Activated CD8-positive, alpha-beta T cell treated with anti-CD3 and anti-CD28 coated beads, Interleukin-2, amount 10 ng/mL, durations not matched to agents 7 days and 5 days (primary cell): ENCODE measurements at regions of chr15 and their contacts with region 1.

Region 1: DNA sequence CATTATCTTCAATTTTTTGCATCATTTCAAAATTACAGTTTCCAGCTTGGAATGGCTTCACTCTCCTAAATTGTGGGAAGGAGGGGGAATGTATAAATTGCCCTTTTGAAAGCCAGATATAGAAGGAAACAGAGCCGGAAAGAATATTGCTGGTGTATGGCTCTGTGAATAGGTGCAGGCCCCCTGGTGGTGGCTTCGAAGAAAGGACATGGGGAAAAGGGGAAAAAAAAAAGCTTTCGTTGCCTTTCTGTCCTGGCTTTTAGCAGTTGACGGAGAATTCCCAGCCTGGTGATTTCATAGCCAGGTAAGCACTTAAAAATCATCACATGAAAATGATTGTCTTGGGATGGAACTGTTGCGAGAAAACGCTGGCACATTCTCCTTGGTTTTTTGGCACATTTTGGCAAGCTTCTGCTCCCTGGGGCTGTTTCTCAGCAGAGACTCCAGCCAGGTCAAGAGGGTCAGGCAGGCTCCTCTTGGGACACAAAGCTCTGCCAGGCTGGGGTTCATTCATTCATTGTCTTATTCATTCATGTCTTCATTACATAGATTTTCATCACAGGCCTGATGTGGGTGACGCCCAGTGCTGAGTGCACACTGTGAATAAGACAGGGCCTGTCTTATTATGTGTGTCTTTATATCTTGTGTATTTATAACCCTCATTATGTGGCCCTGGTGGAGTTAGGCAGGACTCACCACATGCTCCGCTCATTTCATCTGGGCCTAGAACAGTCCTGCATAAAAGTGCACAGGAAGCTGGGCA is 300.0 kb upstream of the TPM1 start:
- DNase-seq: peak; percentile 47
- ATAC-seq: peak; percentile 55
- H3K4me3 Mint-ChIP-seq: no peak overlapping the region
- H3K27ac Mint-ChIP-seq: no peak overlapping the region
- H3K4me1 Mint-ChIP-seq: no peaks in the 10 kb centered on the region
- H3K27me3 Mint-ChIP-seq: no peaks in the 10 kb centered on the region

Region 2: GRCh38 chr15:62482785-62483429 is 259.7 kb before region 1 on chr15:
- CTCF ChIA-PET with region 1: no interaction called
- POLR2A ChIA-PET with region 1: no interaction called
- DNase-seq: peak; percentile 37
- ATAC-seq: peak; percentile 53
- H3K4me3 Mint-ChIP-seq: no peak overlapping the region
- H3K27ac Mint-ChIP-seq: no peak overlapping the region
- H3K4me1 Mint-ChIP-seq: peaks cover 4% of the 10 kb centered on the region
- H3K27me3 Mint-ChIP-seq: peaks cover 4% of the 10 kb centered on the region

Region 3: GRCh38 chr15:62706317-62706716 is 36.3 kb before region 1 on chr15:
- CTCF ChIA-PET with region 1: interaction called, 10 read pairs
- POLR2A ChIA-PET with region 1: interaction called, 3 read pairs
- DNase-seq: no peak
- ATAC-seq: no peak
- H3K4me3 Mint-ChIP-seq: no peak overlapping the region
- H3K27ac Mint-ChIP-seq: no peak overlapping the region
- H3K4me1 Mint-ChIP-seq: no peaks in the 10 kb centered on the region
- H3K27me3 Mint-ChIP-seq: no peaks in the 10 kb centered on the region

Region 4: DNA sequence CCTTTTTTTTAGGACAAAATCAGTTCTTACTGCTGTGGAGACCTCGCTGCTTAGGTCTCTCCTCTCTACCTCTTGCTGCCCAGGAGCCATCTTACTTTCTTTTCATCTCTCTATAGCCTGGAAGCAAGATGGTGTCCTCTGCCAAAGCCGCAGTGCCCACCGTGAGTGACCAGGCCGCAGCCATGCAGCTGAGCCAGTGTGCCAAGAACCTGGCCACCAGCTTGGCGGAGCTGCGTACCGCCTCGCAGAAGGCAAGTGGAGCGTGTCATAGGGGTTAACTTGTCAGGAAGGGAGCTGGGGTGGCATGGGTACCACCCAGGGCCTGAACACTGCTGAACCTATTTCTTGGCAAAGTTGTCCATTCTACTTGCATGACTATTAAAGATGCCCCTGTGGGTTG is 20.4 kb before region 1 on chr15:
- CTCF ChIA-PET with region 1: interaction called, 12 read pairs
- POLR2A ChIA-PET with region 1: no interaction called
- DNase-seq: no peak
- ATAC-seq: no peak
- H3K4me3 Mint-ChIP-seq: no peak overlapping the region
- H3K27ac Mint-ChIP-seq: no peak overlapping the region
- H3K4me1 Mint-ChIP-seq: no peaks in the 10 kb centered on the region
- H3K27me3 Mint-ChIP-seq: no peaks in the 10 kb centered on the region

Region 5: GRCh38 chr15:62732078-62732477 is 10.5 kb before region 1 on chr15:
- CTCF ChIA-PET with region 1: interaction called, 12 read pairs
- POLR2A ChIA-PET with region 1: interaction called, 3 read pairs
- DNase-seq: no peak
- ATAC-seq: no peak
- H3K4me3 Mint-ChIP-seq: no peak overlapping the region
- H3K27ac Mint-ChIP-seq: no peak overlapping the region
- H3K4me1 Mint-ChIP-seq: no peaks in the 10 kb centered on the region
- H3K27me3 Mint-ChIP-seq: peaks cover 11% of the 10 kb centered on the region

Region 6: GRCh38 chr15:62758126-62758951 is 15.7 kb after region 1 on chr15:
- CTCF ChIA-PET with region 1: interaction called, 17 read pairs
- POLR2A ChIA-PET with region 1: no interaction called
- DNase-seq: no peak
- ATAC-seq: no peak
- H3K4me3 Mint-ChIP-seq: no peak overlapping the region
- H3K27ac Mint-ChIP-seq: no peak overlapping the region
- H3K4me1 Mint-ChIP-seq: no peaks in the 10 kb centered on the region
- H3K27me3 Mint-ChIP-seq: no peaks in the 10 kb centered on the region

Region 7: GRCh38 chr15:62809112-62809967 is 66.8 kb after region 1 on chr15:
- CTCF ChIA-PET with region 1: no interaction called
- POLR2A ChIA-PET with region 1: no interaction called
- DNase-seq: no peak
- ATAC-seq: no peak
- H3K4me3 Mint-ChIP-seq: no peak overlapping the region
- H3K27ac Mint-ChIP-seq: no peak overlapping the region
- H3K4me1 Mint-ChIP-seq: no peaks in the 10 kb centered on the region
- H3K27me3 Mint-ChIP-seq: no peaks in the 10 kb centered on the region

Region 8: DNA sequence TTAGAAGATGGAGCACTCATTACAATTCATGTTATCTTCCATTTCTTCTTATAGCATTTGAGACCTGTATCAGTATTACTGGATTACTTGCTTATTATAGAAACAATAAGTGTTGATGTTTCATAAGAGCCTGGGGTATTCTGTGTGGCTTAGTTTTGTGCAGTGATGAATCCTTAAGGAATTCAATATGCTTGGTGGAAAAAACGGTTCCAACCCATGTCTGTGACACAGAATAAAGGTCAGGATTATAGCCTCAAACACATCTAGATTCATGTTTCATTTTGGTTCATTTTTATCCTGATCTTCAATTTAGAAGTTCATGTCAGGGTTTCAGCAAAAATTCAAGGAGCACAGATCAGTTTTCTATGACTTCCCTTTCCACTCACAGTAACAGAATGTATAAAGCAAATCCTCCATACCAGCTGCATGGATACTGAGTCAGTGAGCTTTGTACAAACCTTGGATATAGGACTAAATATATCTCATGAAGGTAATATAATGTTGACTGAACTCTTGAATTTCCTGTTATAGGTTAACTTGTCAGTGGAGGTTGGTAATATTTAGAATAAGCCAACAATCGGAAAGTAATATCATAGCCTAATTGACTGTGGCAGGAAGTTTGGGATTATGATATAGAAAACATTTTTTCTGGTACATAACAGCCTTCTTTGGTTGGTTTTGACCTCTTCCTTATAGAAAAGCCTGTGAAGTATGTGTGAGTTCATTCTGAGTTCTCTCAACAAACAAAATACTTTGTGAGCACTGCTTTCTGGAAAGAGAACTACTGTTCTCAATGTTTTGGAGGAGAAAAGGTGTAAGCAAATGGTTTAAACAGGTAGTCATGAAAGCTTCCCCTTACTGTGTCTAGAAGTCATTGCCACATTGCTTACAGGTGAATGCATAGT is 81.8 kb after region 1 on chr15:
- CTCF ChIA-PET with region 1: no interaction called
- POLR2A ChIA-PET with region 1: no interaction called
- DNase-seq: no peak
- ATAC-seq: no peak
- H3K4me3 Mint-ChIP-seq: no peak overlapping the region
- H3K27ac Mint-ChIP-seq: no peak overlapping the region
- H3K4me1 Mint-ChIP-seq: no peaks in the 10 kb centered on the region
- H3K27me3 Mint-ChIP-seq: peaks cover 3% of the 10 kb centered on the region